ENCODE measurements at regions of chr14 and their contacts with region 1.

Region 1: GRCh38 chr14:103692159-103692558 is 23.1 kb downstream of the XRCC3 start:
- DNase-seq: no peak
- ATAC-seq: no peak
- H3K4me3 Mint-ChIP-seq: no peak overlapping the region
- H3K27ac Mint-ChIP-seq: no peak overlapping the region
- H3K4me1 Mint-ChIP-seq: no peaks in the 10 kb centered on the region
- H3K27me3 Mint-ChIP-seq: no peaks in the 10 kb centered on the region

Region 2: GRCh38 chr14:103613517-103613916 is 78.6 kb before region 1 on chr14:
- CTCF ChIA-PET with region 1: no interaction called
- POLR2A ChIA-PET with region 1: no interaction called
- intact Hi-C with region 1: loop called in 1 of 2 experiments (anchors 5 kb)
- DNase-seq: peak; percentile 44
- ATAC-seq: no peak
- H3K4me3 Mint-ChIP-seq: no peak overlapping the region
- H3K27ac Mint-ChIP-seq: no peak overlapping the region
- H3K4me1 Mint-ChIP-seq: peaks cover under 1% of the 10 kb centered on the region
- H3K27me3 Mint-ChIP-seq: peaks cover 2% of the 10 kb centered on the region

Region 3: DNA sequence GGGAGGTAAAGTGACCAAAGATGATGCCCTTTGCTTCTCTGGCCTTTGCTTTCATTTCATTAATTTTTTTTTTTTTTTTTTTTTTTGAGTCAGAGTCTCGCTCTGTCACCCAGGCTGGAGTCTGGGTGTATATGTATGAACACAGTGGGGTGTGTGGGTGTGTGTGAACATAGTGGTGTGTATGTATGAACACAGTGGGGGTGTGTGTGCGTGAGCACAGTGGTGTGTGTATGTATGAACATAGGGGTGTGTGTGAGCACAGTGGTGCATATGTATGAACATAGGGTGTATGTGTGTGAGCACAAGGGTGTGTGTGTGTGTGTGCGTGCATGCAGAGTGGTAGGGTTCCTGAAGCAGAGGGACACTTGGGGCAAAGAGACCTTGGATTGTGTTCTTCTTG is 53.6 kb before region 1 on chr14:
- CTCF ChIA-PET with region 1: no interaction called
- POLR2A ChIA-PET with region 1: no interaction called
- intact Hi-C with region 1: no loop called
- DNase-seq: no peak
- ATAC-seq: no peak
- H3K4me3 Mint-ChIP-seq: no peak overlapping the region
- H3K27ac Mint-ChIP-seq: peak overlapping the region; percentile 34
- H3K4me1 Mint-ChIP-seq: peaks cover 48% of the 10 kb centered on the region
- H3K27me3 Mint-ChIP-seq: no peaks in the 10 kb centered on the region

Region 4: GRCh38 chr14:103973354-103973753 is 281.2 kb after region 1 on chr14:
- CTCF ChIA-PET with region 1: no interaction called
- POLR2A ChIA-PET with region 1: no interaction called
- intact Hi-C with region 1: no loop called
- DNase-seq: no peak
- ATAC-seq: no peak
- H3K4me3 Mint-ChIP-seq: no peak overlapping the region
- H3K27ac Mint-ChIP-seq: no peak overlapping the region
- H3K4me1 Mint-ChIP-seq: no peaks in the 10 kb centered on the region
- H3K27me3 Mint-ChIP-seq: peaks cover 10% of the 10 kb centered on the region